ENCODE measurements at regions of chr4 and their contacts with region 1.

Region 1: GRCh38 chr4:87911252-87911774 is 64.2 kb upstream of the SPP1 start:
- DNase-seq: no peak
- ATAC-seq: peak; percentile 44

Region 2: DNA sequence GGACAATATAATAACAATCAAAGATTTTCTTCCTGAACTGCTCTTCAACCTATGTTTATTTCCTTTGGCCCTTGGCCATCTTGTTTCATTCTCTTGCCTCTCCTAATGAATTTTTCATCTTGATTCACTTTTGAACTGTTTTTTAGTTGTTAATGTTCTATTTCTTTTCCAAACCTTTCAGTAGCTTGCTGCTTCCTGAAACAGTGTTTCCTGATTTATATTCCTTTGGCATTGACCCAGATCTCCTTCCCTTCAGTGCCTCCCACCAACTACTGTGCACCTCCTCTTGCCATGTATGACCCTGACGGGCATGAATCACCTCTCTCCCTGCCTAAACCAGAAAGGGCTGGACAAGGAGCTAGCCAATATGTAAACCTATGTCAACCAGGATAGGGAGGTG is 38.6 kb after region 1 on chr4:
- intact Hi-C with region 1: no loop called
- DNase-seq: no peak
- ATAC-seq: no peak

Region 3: GRCh38 chr4:87973283-87974169 is 62.2 kb after region 1 on chr4:
- intact Hi-C with region 1: loop called (anchors 5 kb)
- DNase-seq: no peak
- ATAC-seq: peak; percentile 52